PC-3 (cell line): ENCODE measurements at regions of chr12 and their contacts with region 1.

Region 1: DNA sequence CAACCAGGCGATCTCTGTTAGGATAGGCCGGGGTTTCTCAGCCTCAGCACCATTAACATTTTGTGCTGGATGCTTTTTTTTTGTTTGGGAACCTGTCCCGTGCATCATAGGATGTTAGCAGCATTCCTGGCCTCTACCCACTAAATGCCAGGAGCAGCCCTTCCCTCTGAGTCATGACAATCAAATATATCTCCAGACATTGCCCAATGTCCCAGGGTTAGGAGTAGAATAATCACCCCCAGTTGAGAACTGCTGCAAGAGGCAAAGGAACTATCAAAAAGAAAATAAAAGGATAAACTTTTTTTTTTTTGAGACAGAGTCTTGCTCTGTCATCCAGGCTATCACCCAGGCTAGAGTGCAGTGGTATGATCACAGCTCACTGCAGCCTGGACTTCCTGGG is 76.0 kb downstream of the ACACB start:
- DNase-seq: peak; percentile 98
- ATAC-seq: peak; percentile 81
- H3K4me3 ChIP-seq: peak overlapping the region; percentile 45; the same call in 1 of the 2 replicates
- H3K27ac ChIP-seq: peak overlapping the region; percentile 96
- H3K4me1 ChIP-seq: peaks cover 40% of the 10 kb centered on the region
- H3K27me3 ChIP-seq: no peaks in the 10 kb centered on the region
- CTCF ChIP-seq: no peak

Region 2: GRCh38 chr12:109154451-109155438 is 37.6 kb before region 1 on chr12:
- CTCF ChIA-PET with region 1: no interaction called
- POLR2A ChIA-PET with region 1: interaction called, 3 read pairs
- intact Hi-C with region 1: loop called (anchors 1 kb)
- DNase-seq: peak; percentile 94
- ATAC-seq: peak; percentile 89
- H3K4me3 ChIP-seq: peak overlapping the region; percentile 89
- H3K27ac ChIP-seq: peak overlapping the region; percentile 47
- H3K4me1 ChIP-seq: peaks cover 12% of the 10 kb centered on the region
- H3K27me3 ChIP-seq: no peaks in the 10 kb centered on the region
- CTCF ChIP-seq: no peak

Region 3: GRCh38 chr12:109512608-109513007 is 320.2 kb after region 1 on chr12:
- CTCF ChIA-PET with region 1: no interaction called
- POLR2A ChIA-PET with region 1: no interaction called
- intact Hi-C with region 1: no loop called
- DNase-seq: no peak
- ATAC-seq: no peak
- H3K4me3 ChIP-seq: no peak overlapping the region
- H3K27ac ChIP-seq: no peak overlapping the region
- H3K4me1 ChIP-seq: no peaks in the 10 kb centered on the region
- H3K27me3 ChIP-seq: no peaks in the 10 kb centered on the region
- CTCF ChIP-seq: no peak